OCI-LY7 (cell line): ENCODE measurements at regions of chr21 and their contacts with region 1.

Region 1: GRCh38 chr21:25960402-25960801 is 210.2 kb downstream of the APP start:
- DNase-seq: no peak
- H3K4me3 ChIP-seq: no peak overlapping the region
- H3K27ac ChIP-seq: no peak overlapping the region
- H3K4me1 ChIP-seq: peaks cover 14% of the 10 kb centered on the region
- CTCF ChIP-seq: no peak

Region 2: GRCh38 chr21:25938658-25939395 is 21.6 kb before region 1 on chr21:
- CTCF ChIA-PET with region 1: no interaction called
- POLR2A ChIA-PET with region 1: interaction called, 10 read pairs
- intact Hi-C with region 1: no loop called
- DNase-seq: no peak
- H3K4me3 ChIP-seq: no peak overlapping the region
- H3K27ac ChIP-seq: no peak overlapping the region
- H3K4me1 ChIP-seq: no peaks in the 10 kb centered on the region
- CTCF ChIP-seq: no peak

Region 3: DNA sequence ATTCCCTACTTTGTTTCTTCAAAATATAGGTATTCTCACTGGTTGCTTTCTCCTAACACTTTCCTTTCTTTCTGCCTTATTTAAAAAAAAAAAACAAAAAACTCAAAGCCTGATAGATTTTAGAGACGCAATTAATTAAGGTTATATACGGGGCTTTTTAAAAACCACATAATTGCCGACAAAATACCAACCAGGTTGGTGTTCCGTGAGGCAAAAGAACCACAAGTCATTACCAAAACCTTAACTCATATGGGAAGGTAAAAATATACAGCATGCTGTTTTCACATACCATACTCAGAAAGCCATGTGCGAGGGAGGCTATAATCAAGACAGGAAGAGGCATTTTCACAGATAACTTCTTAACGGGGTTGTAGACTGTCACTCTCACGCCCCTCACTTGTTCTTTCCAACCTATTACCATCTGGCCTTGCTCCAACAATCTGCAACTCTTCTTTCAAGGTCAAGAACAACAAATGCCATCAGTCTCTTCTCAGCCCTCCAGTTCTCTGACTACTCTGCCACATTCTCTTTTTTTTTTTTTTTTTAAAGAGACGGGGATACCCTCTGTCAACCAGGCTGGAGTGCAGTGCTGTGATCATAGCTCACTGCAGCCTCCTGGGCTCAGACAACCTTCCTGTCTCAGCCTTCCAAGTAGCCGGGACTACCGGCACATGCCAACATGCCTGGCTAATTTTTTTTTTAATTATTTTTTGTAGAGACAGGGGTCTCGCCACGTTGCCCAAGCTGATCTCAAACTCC is 107.6 kb after region 1 on chr21:
- CTCF ChIA-PET with region 1: no interaction called
- POLR2A ChIA-PET with region 1: no interaction called
- intact Hi-C with region 1: no loop called
- DNase-seq: no peak
- H3K4me3 ChIP-seq: no peak overlapping the region
- H3K27ac ChIP-seq: no peak overlapping the region
- H3K4me1 ChIP-seq: peaks cover 18% of the 10 kb centered on the region
- CTCF ChIP-seq: no peak